ENCODE measurements at regions of chr17 and their contacts with region 1.

Region 1: GRCh38 chr17:80263253-80264204 is 2.9 kb downstream of the RNF213 start:
- DNase-seq: peak; percentile 72 to 94
- ATAC-seq: peak; percentile 42 to 59 (median 57)
- H3K4me3 ChIP-seq: peak overlapping the region; percentile 83
- H3K4me3 Mint-ChIP-seq: peak overlapping the region; percentile 85
- H3K27ac ChIP-seq: peak overlapping the region; percentile 70
- H3K27ac Mint-ChIP-seq: peak overlapping the region; percentile 84 to 87
- H3K4me1 ChIP-seq: peaks cover 80% of the 10 kb centered on the region
- H3K4me1 Mint-ChIP-seq: peaks cover 43 to 44% of the 10 kb centered on the region in 2 donors
- H3K27me3 ChIP-seq: no peaks in the 10 kb centered on the region
- H3K27me3 Mint-ChIP-seq: no peaks in the 10 kb centered on the region
- CTCF ChIP-seq: no peak

Region 2: GRCh38 chr17:80147035-80147836 is 116.3 kb before region 1 on chr17 and contains the start of gene EIF4A3:
- intact Hi-C with region 1: loop called (anchors 2 kb)
- DNase-seq: peak; percentile 90 to 99
- ATAC-seq: peak; percentile 91 to 98 (median 92)
- H3K4me3 ChIP-seq: peak within 1 kb of the TSS; percentile 83
- H3K4me3 Mint-ChIP-seq: peak within 1 kb of the TSS; percentile 96
- H3K27ac ChIP-seq: peak within 1 kb of the TSS; percentile 85
- H3K27ac Mint-ChIP-seq: peak within 1 kb of the TSS; percentile 73 to 93
- H3K4me1 ChIP-seq: peaks cover 29% of the 10 kb centered on the region
- H3K4me1 Mint-ChIP-seq: peaks cover 22 to 31% of the 10 kb centered on the region in 2 donors
- H3K27me3 ChIP-seq: no peaks in the 10 kb centered on the region
- H3K27me3 Mint-ChIP-seq: no peaks in the 10 kb centered on the region
- CTCF ChIP-seq: no peak
- total RNA-seq, gene EIF4A3: 86.2 to 88.6 (median 88.0) TPM

Region 3: DNA sequence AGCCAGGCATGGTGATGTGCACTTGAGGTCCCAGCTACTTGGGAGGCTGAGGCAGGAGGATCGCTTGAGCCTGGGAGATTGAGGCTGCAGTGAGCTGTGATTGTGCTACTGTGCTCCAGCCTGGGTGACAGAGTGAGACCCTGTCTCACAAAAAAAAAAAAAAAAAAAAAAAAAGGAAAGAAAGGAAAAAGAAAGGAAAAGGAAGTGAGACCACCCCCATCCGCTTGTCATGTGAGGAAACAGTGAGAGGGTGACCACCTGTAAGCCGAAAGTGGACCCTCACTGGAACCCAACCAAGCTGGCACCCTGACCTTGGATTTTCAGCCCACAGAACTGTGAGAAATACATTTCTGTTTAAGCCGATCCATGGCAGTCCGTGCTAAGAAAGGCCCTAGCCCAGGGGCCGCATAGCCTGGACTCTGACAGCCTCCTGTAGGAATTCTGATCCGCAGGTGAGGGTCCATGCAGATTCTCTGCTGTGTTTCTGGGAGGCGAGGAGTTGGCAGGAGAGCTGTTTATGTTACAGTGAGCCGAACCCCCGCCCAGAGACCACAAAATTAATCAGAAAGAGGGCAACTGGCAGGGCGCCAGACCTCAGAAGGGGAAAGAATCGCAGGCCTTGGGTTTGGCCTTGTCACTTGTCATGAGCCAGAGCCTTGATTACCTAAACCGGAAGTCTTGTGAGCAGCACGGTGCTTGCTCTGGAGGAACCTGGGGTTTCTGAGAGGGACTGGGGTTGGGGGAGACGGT is 44.3 kb before region 1 on chr17:
- intact Hi-C with region 1: loop called (anchors 2 kb)
- DNase-seq: peak; percentile 93 to 96
- ATAC-seq: peak; percentile 86 to 90 (median 86)
- H3K4me3 ChIP-seq: peak overlapping the region; percentile 59
- H3K4me3 Mint-ChIP-seq: peak overlapping the region; percentile 89
- H3K27ac ChIP-seq: peak overlapping the region; percentile 91
- H3K27ac Mint-ChIP-seq: peak overlapping the region; percentile 90 to 95
- H3K4me1 ChIP-seq: peaks cover 40% of the 10 kb centered on the region
- H3K4me1 Mint-ChIP-seq: peaks cover 25 to 45% of the 10 kb centered on the region in 2 donors
- H3K27me3 ChIP-seq: no peaks in the 10 kb centered on the region
- H3K27me3 Mint-ChIP-seq: no peaks in the 10 kb centered on the region
- CTCF ChIP-seq: no peak

Region 4: GRCh38 chr17:80313160-80313828 is 49.8 kb after region 1 on chr17:
- intact Hi-C with region 1: loop called (anchors 5 kb)
- DNase-seq: no peak
- ATAC-seq: peak in 2 of 3 donors; percentile 38 to 41
- H3K4me3 ChIP-seq: no peak overlapping the region
- H3K4me3 Mint-ChIP-seq: peak overlapping the region; percentile 37
- H3K27ac ChIP-seq: peak overlapping the region; percentile 17
- H3K27ac Mint-ChIP-seq: peak overlapping the region; percentile 51 to 88
- H3K4me1 ChIP-seq: peaks cover 2% of the 10 kb centered on the region
- H3K4me1 Mint-ChIP-seq: peaks cover 13 to 28% of the 10 kb centered on the region in 2 donors
- H3K27me3 ChIP-seq: no peaks in the 10 kb centered on the region
- H3K27me3 Mint-ChIP-seq: no peaks in the 10 kb centered on the region
- CTCF ChIP-seq: no peak

Region 5: DNA sequence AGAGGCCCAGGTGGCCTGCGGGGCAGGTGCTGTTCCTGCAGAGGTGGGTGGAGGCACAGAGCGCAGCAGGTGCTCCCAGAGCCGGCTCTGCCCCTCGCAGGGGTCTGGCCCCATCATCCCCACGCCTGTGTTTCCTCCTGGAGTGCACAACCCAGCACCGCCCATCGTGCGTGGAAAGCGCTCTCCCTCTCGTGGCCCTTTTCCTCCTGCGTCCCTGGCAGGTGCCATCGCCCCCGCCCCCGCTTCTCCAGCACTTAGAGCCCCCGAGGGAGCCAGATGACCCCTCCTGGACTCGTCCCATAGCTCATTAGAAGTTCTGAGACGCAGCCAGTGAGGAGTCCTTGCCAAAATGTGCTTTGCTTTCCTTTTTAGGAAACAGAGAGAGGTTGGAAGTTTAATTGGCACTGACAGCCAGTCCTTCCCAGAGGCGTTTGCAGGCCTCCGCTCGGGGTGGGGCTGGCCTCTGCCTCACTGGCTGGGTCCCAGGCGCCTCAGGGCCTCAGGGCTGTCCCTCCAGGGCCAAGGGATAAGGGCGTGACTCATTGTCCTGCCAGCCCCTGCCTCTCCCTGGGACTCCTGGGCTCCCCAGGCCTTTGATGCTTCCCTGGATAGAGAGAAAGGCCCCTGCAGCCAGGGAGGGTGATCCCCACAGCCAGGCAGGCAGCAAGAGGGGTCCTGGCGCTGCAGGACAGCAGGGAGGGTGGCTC is 696.0 kb after region 1 on chr17:
- intact Hi-C with region 1: no loop called
- DNase-seq: no peak
- ATAC-seq: no peak
- H3K4me3 ChIP-seq: no peak overlapping the region
- H3K4me3 Mint-ChIP-seq: no peak overlapping the region
- H3K27ac ChIP-seq: no peak overlapping the region
- H3K27ac Mint-ChIP-seq: no peak overlapping the region
- H3K4me1 ChIP-seq: no peaks in the 10 kb centered on the region
- H3K4me1 Mint-ChIP-seq: no peaks in the 10 kb centered on the region
- H3K27me3 ChIP-seq: no peaks in the 10 kb centered on the region
- H3K27me3 Mint-ChIP-seq: no peaks in the 10 kb centered on the region
- CTCF ChIP-seq: no peak

Measured in natural killer cell (primary cell).